OCI-LY7 (cell line): ENCODE measurements at regions of chr1 and their contacts with region 1.

Region 1: DNA sequence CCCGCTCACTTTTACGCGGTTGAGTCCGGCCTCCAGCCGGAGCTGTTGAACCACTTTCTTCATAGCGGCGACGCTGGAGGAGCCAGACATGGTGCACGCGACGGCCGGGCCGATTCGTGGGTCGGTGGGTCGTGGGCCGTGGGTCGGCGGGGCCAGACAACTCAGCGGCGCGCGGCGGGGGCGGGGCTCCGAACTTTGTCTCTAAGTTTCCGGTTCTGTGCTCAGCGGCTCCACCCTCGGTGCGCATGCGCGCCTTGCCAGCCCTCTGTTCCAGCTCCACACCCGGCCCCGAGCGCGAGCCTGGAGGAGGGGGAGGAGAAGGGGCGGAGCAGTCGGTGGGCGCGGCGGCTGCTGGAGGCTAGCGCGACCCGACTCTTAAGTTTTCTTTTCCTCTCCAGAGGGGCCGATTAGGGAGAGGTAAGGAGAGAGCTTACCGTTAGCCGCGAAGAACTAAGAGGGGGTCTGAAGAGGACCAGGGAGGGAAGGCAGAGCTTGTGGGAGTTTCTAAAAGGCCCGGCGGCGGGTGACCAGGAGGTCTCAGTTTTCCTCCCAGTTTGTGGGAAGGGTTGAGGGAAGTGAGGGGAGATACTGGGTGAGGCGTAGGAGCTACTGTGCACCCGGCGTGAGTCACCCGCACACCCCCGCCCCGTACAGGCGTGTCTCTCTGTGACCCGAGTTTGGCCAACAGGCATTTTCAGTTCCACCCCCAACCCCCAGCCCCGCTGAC is at the starts of genes GNG5 and SPATA1:
- DNase-seq: peak; percentile 96
- H3K4me3 ChIP-seq: peak within 1 kb of the TSS; percentile 91
- H3K27ac ChIP-seq: peak within 1 kb of the TSS; percentile 87
- H3K4me1 ChIP-seq: peaks cover 33% of the 10 kb centered on the region
- CTCF ChIP-seq: no peak
- total RNA-seq, gene GNG5: 25.7 and 45.1 TPM in 2 replicates
- total RNA-seq, gene SPATA1: 4.7 and 4.8 TPM in 2 replicates

Region 2: GRCh38 chr1:83761167-83762038 is 744.8 kb before region 1 on chr1:
- CTCF ChIA-PET with region 1: no interaction called
- POLR2A ChIA-PET with region 1: no interaction called
- intact Hi-C with region 1: loop called (anchors 10 kb)
- DNase-seq: peak; percentile 96
- H3K4me3 ChIP-seq: peak overlapping the region; percentile 63
- H3K27ac ChIP-seq: peak overlapping the region; percentile 96
- H3K4me1 ChIP-seq: peaks cover 69% of the 10 kb centered on the region
- CTCF ChIP-seq: peak; percentile 31

Region 3: DNA sequence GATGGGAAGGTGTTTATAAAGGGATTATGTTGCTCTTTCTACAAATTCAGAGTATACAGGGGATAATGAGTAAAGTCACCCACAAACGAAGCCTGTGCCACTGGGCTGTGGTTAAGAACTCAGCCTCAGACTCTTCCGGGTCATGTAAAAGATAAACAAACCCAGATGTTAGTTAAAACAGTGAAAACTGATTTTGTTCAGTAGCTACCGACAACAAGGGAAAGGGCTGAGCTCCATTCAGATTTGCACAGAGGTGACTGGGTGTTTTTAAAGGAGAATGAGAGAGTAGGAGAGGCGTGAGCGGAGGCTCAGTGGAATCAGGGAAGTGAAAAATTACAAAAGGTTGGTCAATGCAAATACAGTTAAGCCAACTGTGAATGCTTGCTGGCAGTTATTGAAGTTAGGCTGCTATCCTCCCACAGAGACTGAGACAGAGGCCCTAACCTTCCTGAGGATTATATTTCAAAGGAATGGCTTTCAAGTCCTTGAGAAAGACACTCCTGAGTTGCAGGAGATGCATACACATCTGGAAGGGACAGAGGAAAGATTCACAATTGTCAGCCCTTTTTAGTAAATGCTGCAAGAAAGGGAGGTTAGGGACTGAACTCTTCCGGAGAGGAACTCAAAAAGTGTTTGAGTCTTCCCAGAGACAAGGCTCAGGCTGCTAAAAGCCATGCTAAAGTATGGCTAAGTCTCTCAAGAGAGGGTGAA is 234.6 kb before region 1 on chr1:
- CTCF ChIA-PET with region 1: no interaction called
- POLR2A ChIA-PET with region 1: no interaction called
- intact Hi-C with region 1: loop called (anchors 5 kb)
- DNase-seq: peak; percentile 85
- H3K4me3 ChIP-seq: peak overlapping the region; percentile 57
- H3K27ac ChIP-seq: peak overlapping the region; percentile 90
- H3K4me1 ChIP-seq: peaks cover 30% of the 10 kb centered on the region
- CTCF ChIP-seq: no peak

Region 4: GRCh38 chr1:84492726-84493125 is 13.4 kb before region 1 on chr1:
- CTCF ChIA-PET with region 1: no interaction called
- POLR2A ChIA-PET with region 1: interaction called, 9 read pairs
- intact Hi-C with region 1: loop called (anchors 1 kb)
- DNase-seq: no peak
- H3K4me3 ChIP-seq: no peak overlapping the region
- H3K27ac ChIP-seq: no peak overlapping the region
- H3K4me1 ChIP-seq: no peaks in the 10 kb centered on the region
- CTCF ChIP-seq: no peak

Region 5: GRCh38 chr1:84620720-84621313 is 114.7 kb after region 1 on chr1:
- CTCF ChIA-PET with region 1: no interaction called
- POLR2A ChIA-PET with region 1: interaction called, 3 read pairs
- intact Hi-C with region 1: loop called (anchors 2 kb)
- DNase-seq: peak; percentile 87
- H3K4me3 ChIP-seq: peak overlapping the region; percentile 73
- H3K27ac ChIP-seq: peak overlapping the region; percentile 38
- H3K4me1 ChIP-seq: peaks cover 9% of the 10 kb centered on the region
- CTCF ChIP-seq: peak; percentile 100

Region 6: DNA sequence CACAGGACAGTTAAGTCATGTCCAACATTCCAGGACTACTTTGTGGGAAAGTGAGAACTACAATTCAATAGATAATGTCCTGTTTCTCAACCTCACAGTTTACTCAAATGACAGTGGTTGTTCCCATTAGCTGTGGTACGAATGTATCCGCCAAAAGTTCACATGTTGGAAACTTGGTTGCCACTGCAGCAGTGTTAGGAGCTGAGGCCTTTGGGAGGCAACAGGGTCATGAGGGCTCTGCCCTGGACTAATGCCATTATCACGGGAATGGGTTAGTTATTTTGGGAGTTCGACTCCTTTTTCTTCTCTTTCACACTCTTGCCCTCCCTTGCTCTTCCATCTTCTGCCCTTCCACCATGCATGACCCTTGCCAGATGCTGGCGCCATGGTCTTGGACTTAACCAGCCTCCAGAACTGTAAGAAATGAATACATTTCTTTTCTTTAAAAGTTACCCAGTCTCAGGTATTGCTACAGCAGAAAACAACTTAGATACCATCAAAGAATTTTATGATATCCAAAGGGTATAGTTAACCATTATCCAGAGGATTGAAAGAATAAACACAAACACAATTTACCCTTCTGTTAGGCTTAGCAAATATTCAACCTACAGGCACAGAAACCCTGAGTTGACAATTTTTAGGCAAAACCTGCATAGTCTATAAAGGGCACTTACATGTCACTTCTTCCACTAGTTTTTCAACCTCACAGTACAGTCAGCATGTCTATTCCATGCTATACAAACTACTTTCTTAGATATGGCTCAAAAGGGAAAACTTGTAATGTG is 762.8 kb after region 1 on chr1:
- CTCF ChIA-PET with region 1: no interaction called
- POLR2A ChIA-PET with region 1: no interaction called
- intact Hi-C with region 1: loop called (anchors 5 kb)
- DNase-seq: no peak
- H3K4me3 ChIP-seq: no peak overlapping the region
- H3K27ac ChIP-seq: no peak overlapping the region
- H3K4me1 ChIP-seq: peaks cover 4% of the 10 kb centered on the region
- CTCF ChIP-seq: no peak